IMR-90 (cell line): ENCODE measurements at regions of chr9 and their contacts with region 1.

Region 1: DNA sequence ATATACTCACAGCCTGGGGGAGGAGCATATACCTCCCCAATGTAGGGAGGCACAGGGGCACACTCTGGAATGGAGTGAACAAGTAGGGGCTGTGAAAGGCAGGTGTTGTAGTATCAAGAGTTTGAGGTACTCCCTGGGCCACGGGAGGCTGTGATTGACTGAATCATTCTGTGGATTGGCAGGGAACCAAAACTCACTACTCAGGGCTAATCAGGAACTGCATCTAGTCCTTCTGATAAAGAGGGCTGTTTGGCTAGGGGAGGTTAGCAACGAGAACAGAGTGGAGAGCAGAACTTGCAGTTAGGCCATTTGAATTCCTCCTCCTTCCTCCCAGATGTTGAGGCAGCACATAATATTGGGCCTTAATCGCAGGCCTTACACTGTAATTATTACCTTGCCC is 369.2 kb upstream of the MPDZ start:
- DNase-seq: no peak
- ATAC-seq: no peak
- H3K4me3 ChIP-seq: no peak overlapping the region
- H3K27ac ChIP-seq: no peak overlapping the region
- H3K4me1 ChIP-seq: no peaks in the 10 kb centered on the region
- H3K27me3 ChIP-seq: no peaks in the 10 kb centered on the region
- CTCF ChIP-seq: no peak
- POLR2A ChIP-seq: no peak
- RAD21 ChIP-seq: no peak

Region 2: DNA sequence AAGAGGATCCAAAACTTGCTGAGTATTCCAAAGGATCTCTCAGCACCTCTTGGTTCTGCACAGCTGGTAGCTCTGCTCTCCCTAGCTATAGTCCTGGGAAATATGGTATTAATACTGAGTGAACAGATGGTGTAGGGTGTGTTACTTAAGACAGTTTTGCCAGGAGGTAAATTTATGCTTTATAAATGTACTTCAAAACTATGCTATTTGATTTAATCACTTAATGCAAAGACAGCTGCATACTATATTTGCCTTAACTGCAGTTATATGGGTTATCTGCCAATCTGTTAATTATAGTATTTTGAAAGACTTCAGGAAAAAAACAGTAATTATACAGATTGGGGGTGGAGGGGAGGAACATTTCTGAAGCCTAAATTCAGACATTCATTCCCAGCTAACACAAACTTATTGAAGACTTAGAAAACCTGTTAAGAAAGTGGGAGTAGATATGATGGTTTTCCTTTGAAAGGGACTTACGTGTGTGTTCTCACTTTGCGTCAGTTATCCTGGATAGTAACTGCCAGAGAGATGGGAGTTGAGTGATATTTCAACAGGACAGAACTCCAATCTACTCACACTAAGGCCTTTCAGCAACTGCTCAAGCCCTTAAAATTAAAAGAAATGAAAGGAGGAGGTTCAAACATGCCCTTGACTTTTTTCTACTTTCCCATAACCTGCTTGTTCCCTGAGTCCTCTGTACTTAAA is 584.5 kb before region 1 on chr9:
- CTCF ChIA-PET with region 1: no interaction called
- POLR2A ChIA-PET with region 1: no interaction called
- dilution Hi-C with region 1: no loop called
- in situ Hi-C with region 1: no loop called
- intact Hi-C with region 1: loop called (anchors 10 kb)
- DNase-seq: no peak
- ATAC-seq: no peak
- H3K4me3 ChIP-seq: no peak overlapping the region
- H3K27ac ChIP-seq: no peak overlapping the region
- H3K4me1 ChIP-seq: no peaks in the 10 kb centered on the region
- H3K27me3 ChIP-seq: peaks cover 8% of the 10 kb centered on the region; the same call in 1 of the 2 replicates
- CTCF ChIP-seq: no peak
- POLR2A ChIP-seq: no peak
- RAD21 ChIP-seq: no peak